Activated T-helper 1 cell treated with anti-CD3 and anti-CD28 coated beads, Interleukin-12 subunit alpha, Interleukin-12 subunit beta, Interleukin-2, Interleukin-4 antibody, amounts not matched to agents 30 ng/mL and 10 ng/mL and 1 ng/mL, durations not matched to agents 14 hours and 24 hours and 36 hours (primary cell): ENCODE measurements at regions of chr12 and their contacts with region 1.

Region 1: GRCh38 chr12:24724814-24725213 is 224.1 kb downstream of the BCAT1 start:
- DNase-seq: no peak
- H3K4me3 Mint-ChIP-seq: no peak overlapping the region
- H3K27ac Mint-ChIP-seq: peak overlapping the region; percentile 64
- H3K4me1 Mint-ChIP-seq: peaks cover 27% of the 10 kb centered on the region
- H3K27me3 Mint-ChIP-seq: peaks cover 1% of the 10 kb centered on the region

Region 2: DNA sequence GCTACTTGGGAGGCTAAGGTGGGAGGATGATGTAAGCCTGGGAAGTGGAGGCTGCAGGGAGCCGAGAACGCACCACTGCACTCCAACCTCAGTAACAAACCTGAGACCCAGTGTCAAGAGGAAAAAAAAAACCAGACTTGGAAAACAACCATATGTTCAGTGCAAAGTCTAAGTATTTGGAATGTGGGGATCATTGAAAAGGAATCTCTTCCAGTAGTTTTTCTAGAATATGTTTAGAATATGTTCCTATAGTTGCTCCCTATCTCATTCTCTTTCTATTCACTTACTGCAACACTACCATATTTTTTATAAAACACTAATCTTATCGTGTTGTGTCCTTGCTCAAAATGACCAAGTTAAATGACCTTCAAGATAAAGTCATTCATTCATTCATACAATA is 351.8 kb before region 1 on chr12:
- intact Hi-C with region 1: no loop called
- DNase-seq: no peak
- H3K4me3 Mint-ChIP-seq: no peak overlapping the region
- H3K27ac Mint-ChIP-seq: no peak overlapping the region
- H3K4me1 Mint-ChIP-seq: no peaks in the 10 kb centered on the region
- H3K27me3 Mint-ChIP-seq: no peaks in the 10 kb centered on the region

Region 3: GRCh38 chr12:24709216-24709615 is 15.6 kb before region 1 on chr12:
- intact Hi-C with region 1: loop called (anchors 2 kb)
- DNase-seq: no peak
- H3K4me3 Mint-ChIP-seq: no peak overlapping the region
- H3K27ac Mint-ChIP-seq: no peak overlapping the region
- H3K4me1 Mint-ChIP-seq: peaks cover 20% of the 10 kb centered on the region
- H3K27me3 Mint-ChIP-seq: no peaks in the 10 kb centered on the region